Natural killer cell (primary cell): ENCODE measurements at regions of chr15 and their contacts with region 1.

Region 1: GRCh38 chr15:69058830-69059556 is 44.5 kb downstream of the NOX5 start:
- DNase-seq: peak; percentile 52 to 85
- ATAC-seq: peak in 2 of 3 donors; percentile 34 to 66
- H3K4me3 ChIP-seq: no peak overlapping the region
- H3K4me3 Mint-ChIP-seq: no peak overlapping the region
- H3K27ac ChIP-seq: no peak overlapping the region
- H3K27ac Mint-ChIP-seq: no peak overlapping the region
- H3K4me1 ChIP-seq: peaks cover 6% of the 10 kb centered on the region
- H3K4me1 Mint-ChIP-seq: peaks cover 4 to 10% of the 10 kb centered on the region in 2 donors
- H3K27me3 ChIP-seq: no peaks in the 10 kb centered on the region
- H3K27me3 Mint-ChIP-seq: peaks cover 14 to 18% of the 10 kb centered on the region in 2 donors
- CTCF ChIP-seq: peak; percentile 79

Region 2: GRCh38 chr15:68739390-68740080 is 319.5 kb before region 1 on chr15:
- intact Hi-C with region 1: no loop called
- DNase-seq: no peak
- ATAC-seq: no peak
- H3K4me3 ChIP-seq: no peak overlapping the region
- H3K4me3 Mint-ChIP-seq: no peak overlapping the region
- H3K27ac ChIP-seq: no peak overlapping the region
- H3K27ac Mint-ChIP-seq: no peak overlapping the region
- H3K4me1 ChIP-seq: no peaks in the 10 kb centered on the region
- H3K4me1 Mint-ChIP-seq: no peaks in the 10 kb centered on the region
- H3K27me3 ChIP-seq: no peaks in the 10 kb centered on the region
- H3K27me3 Mint-ChIP-seq: peaks cover 0 to 4% of the 10 kb centered on the region in 2 donors
- CTCF ChIP-seq: no peak

Region 3: DNA sequence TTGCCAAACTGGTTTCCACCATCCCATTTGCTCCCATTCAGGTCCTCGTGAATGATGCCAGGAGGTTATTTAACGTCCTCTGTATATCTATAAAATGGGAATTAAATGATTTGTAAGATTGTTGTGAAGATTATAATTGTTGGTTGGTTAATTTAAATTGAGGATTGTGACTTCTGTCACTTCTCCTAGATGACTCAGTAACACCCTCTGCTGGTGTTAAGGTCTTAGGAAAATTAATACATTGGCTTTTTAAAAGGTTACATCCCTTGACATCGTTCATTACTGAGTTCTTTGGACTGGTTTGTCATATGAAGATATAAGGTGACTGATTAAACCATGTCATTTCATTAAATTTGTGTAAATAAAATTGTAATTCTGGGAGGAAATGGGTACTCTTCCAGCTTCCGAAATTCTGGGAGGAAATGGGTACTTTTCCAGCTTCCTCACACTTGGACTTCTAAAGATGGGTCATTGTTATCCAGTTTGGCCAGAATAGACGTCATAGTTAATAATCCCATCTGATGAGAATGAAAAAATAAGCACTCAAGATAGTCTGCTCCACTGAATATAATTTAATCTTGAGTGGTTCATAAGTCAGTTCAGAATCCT is 206.5 kb after region 1 on chr15:
- intact Hi-C with region 1: loop called (anchors 5 kb)
- DNase-seq: peak in 1 of 2 donors; percentile 48
- ATAC-seq: no peak
- H3K4me3 ChIP-seq: no peak overlapping the region
- H3K4me3 Mint-ChIP-seq: no peak overlapping the region
- H3K27ac ChIP-seq: no peak overlapping the region
- H3K27ac Mint-ChIP-seq: no peak overlapping the region
- H3K4me1 ChIP-seq: no peaks in the 10 kb centered on the region
- H3K4me1 Mint-ChIP-seq: no peaks in the 10 kb centered on the region
- H3K27me3 ChIP-seq: no peaks in the 10 kb centered on the region
- H3K27me3 Mint-ChIP-seq: no peaks in the 10 kb centered on the region
- CTCF ChIP-seq: no peak

Region 4: DNA sequence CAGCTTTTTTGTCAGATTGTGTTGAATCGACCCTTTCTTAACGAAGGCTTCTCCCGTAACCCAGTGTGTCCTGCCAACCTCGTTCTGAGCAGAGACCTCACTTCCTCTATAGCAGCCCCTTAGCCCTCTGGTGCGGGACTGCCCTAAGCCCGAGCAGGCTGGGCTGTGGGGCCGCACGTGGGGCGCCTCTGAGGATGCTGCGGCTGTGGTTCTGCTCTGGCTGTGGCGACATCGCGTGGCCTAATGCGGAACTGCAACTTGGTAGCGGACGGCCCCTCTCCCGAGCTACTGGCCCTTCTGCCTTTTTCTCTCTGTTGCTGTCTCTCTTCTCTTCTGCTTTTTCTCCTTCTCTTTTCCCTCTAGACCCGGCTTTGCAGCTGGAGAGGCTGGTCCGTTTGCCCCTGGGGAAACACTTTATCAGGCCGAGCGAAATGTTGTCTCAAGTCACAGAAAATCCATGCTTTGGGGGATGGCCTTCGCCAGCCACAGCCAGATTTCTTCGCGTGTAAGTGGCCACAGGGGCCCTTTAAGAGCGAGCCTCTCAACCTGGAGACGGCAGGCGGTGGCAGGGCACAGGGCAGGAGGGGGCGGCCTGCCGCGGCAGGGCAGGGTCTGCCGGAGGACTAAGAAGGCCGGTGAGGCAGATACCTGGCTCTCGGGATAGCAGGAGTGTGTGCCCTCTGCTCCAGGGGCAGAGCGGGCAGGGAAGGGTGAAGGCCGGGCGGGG is 335.7 kb after region 1 on chr15:
- intact Hi-C with region 1: loop called (anchors 1 kb)
- DNase-seq: peak; percentile 80 to 87
- ATAC-seq: peak; percentile 93 to 100 (median 99)
- H3K4me3 ChIP-seq: no peak overlapping the region
- H3K4me3 Mint-ChIP-seq: no peak overlapping the region
- H3K27ac ChIP-seq: no peak overlapping the region
- H3K27ac Mint-ChIP-seq: no peak overlapping the region
- H3K4me1 ChIP-seq: peaks cover 6% of the 10 kb centered on the region
- H3K4me1 Mint-ChIP-seq: peaks cover 0 to 8% of the 10 kb centered on the region in 2 donors
- H3K27me3 ChIP-seq: no peaks in the 10 kb centered on the region
- H3K27me3 Mint-ChIP-seq: peaks cover 0 to 8% of the 10 kb centered on the region in 2 donors
- CTCF ChIP-seq: peak; percentile 97